AG04449 (cell line): ENCODE measurements at regions of chr9 and their contacts with region 1.

Region 1: GRCh38 chr9:87678650-87679515 is 47.0 kb upstream of the CTSL start:
- DNase-seq: peak; percentile 40
- H3K4me3 ChIP-seq: no peak overlapping the region
- CTCF ChIP-seq: peak; percentile 83

Region 2: DNA sequence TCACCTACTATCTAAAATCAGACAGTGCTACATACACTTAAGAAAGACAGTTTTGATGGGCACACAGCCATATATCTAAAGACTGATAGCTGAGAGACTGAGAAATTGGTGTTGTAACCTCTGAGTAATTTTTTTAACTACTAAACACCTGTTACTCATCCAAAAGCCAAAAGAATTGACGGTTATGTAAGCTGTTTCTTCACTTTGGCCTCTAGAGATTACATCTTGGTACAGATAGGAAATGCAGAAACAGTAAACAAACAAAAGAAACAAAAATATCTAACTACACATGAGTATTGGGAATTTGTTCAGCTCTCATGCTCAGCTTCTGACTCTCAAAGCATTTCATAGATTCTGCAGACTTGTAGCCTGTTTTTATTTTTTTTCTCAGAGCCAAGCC is 579.5 kb before region 1 on chr9:
- CTCF ChIA-PET with region 1: no interaction called
- POLR2A ChIA-PET with region 1: no interaction called
- DNase-seq: no peak
- H3K4me3 ChIP-seq: no peak overlapping the region
- CTCF ChIP-seq: no peak

Region 3: DNA sequence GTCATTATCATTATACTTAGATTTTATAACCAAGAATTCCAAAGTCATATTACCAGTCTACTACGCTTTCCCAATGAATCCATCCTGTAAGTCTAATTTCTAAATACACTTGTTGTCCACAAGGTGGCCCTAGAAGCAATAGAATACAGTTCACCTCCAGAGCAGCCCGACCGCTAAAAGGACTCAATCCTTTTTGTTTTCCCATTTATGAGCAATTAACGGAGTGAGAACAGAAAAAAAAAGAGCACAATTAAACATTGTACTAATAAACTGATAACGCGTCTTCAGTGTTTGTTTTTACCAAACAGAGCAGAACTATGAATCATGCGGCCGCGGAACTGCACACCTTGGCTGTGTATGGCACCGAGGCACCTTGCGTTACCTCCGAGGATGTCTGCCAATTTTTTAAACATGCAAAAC is 342.0 kb before region 1 on chr9:
- CTCF ChIA-PET with region 1: interaction called, 13 read pairs
- POLR2A ChIA-PET with region 1: no interaction called
- DNase-seq: peak; percentile 51
- H3K4me3 ChIP-seq: peak overlapping the region; percentile 51
- CTCF ChIP-seq: peak; percentile 46

Region 4: DNA sequence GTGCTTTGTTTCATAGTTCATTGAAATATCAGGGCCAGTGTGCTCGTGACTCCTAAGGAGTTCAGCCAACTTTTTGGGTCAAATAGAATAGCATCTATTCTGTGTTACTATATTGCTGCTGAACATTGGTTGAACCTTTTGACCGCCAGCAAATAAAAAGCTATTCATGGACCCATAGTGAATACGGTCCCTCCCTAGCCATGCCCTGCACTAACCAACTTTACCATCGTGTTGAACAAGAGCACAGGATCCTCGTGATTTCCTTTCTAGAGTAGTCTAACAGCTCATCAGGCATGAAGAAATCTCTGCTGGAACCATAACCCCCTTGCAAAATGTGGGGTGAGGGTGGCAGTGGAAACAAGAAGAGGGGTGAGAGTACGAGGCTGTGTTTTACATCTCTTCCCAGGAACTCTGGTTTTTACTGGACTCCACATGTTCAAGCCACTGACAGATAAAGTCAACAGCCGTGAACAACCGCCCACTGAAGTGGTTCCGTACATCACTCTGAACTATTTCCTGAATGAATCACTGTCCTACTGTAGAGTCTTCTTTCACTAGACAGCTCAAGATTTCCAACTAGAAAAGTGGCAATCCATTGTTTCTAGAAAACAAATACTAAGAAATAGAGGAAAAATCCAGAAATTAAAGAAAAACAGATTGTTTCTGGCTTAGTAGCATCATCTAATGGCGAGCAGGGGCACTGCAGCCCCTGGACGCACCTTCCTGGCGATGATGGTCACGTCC is 133.7 kb after region 1 on chr9:
- CTCF ChIA-PET with region 1: interaction called, 173 read pairs
- POLR2A ChIA-PET with region 1: no interaction called
- DNase-seq: peak; percentile 28
- H3K4me3 ChIP-seq: no peak overlapping the region
- CTCF ChIP-seq: peak; percentile 84

Region 5: DNA sequence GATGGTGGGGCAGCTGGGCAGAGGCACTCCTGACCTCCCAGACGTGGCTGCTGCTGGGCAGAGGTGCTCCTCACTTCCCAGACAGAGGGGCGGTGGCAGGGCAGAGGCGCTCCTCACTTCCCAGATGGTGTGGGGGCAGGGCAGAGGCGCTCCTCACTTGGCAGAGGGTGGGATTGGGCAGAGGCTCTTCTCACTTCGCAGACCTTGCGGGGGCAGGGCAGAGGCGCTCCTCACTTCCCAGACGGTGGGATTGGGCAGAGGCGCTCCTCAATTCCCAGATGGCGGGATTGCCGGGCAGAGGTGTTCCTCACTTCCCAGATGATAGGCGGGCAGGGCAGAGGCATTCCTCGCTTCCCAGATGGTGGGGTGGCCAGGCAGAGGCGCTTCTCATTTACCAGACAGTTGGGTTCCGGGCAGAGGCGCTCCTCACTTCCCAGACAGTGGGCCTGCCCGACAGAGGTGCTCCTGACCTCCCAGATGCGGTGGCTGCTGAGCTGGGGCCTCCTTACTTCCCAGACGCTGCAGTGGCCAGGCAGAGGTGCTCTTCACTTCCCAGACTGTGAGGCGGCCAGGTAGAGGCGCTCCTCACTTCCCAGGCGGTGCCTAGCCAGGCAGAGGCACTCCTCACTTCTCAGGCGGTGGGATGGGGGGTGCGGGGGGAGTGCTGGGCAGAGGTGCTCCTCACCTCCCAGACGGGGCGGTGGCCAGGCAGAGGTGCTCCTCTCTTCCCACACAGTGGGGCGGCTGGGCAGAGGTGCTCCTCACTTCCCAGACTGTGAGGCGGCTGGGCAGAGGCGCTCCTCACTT is 178.5 kb after region 1 on chr9:
- CTCF ChIA-PET with region 1: no interaction called
- POLR2A ChIA-PET with region 1: no interaction called
- DNase-seq: no peak
- H3K4me3 ChIP-seq: no peak overlapping the region
- CTCF ChIP-seq: no peak

Region 6: DNA sequence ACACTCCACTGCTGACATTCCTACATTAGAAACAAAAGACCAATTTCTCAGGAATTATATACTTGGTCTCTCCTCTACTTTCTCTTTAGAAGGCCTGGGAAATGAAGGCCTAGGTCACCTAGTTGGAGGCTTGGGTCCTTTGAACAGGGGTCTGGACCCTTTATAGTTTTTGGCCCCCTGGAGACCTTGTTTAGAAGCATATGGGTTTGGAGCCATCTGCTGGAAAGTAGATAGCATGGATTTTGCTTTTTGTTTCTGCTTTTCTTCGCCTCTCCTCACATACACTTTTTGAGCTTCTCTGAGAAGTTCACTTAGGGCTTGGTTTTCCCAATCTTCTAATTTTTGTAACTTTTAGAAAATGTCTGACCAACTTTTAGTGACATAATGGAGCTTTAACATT is 362.6 kb after region 1 on chr9:
- CTCF ChIA-PET with region 1: interaction called, 42 read pairs
- POLR2A ChIA-PET with region 1: no interaction called
- DNase-seq: no peak
- H3K4me3 ChIP-seq: no peak overlapping the region
- CTCF ChIP-seq: peak; percentile 15